ENCODE measurements at regions of chr14 and their contacts with region 1.

Region 1: GRCh38 chr14:22472935-22473854 is 115.8 kb downstream of the DAD1 start:
- DNase-seq: peak in 1 of 2 experiments; percentile 66
- H3K4me3 ChIP-seq: no peak overlapping the region
- H3K27ac ChIP-seq: no peak overlapping the region
- H3K4me1 ChIP-seq: peaks cover 0 to 4% (median under 1%) of the 10 kb centered on the region in 4 experiments; a peak in 2 of 7 replicates
- H3K27me3 ChIP-seq: no peaks in the 10 kb centered on the region; a peak in 1 of 7 replicates
- CTCF ChIP-seq: peak in 2 of 3 experiments; percentile 63 to 75; a peak in 3 of 4 replicates
- EP300 ChIP-seq: no peak
- POLR2A ChIP-seq: no peak
- RAD21 ChIP-seq: peak; percentile 84 to 87

Region 2: DNA sequence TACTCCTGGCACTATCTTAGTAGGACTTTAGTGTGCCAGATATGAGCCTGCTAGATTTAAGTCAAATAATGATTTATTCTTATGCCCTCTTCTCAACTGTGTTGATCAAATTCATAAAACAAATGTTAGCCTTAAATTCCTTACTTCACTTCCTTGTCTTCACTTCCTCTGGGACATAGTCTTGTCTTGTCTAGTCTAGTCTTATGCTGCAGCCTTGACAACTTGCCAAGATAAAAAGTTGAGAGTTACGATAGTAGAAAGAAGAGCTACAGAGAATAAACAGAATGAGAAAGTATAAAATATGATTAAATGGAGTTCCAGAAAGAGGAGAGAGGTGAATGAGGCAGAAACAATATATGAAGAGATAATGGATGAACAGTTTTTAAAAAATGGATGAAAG is 262.3 kb before region 1 on chr14:
- CTCF ChIA-PET with region 1: no interaction called
- POLR2A ChIA-PET with region 1: no interaction called
- DNase-seq: no peak
- H3K4me3 ChIP-seq: no peak overlapping the region
- H3K27ac ChIP-seq: no peak overlapping the region
- H3K4me1 ChIP-seq: no peaks in the 10 kb centered on the region
- H3K27me3 ChIP-seq: no peaks in the 10 kb centered on the region
- CTCF ChIP-seq: no peak
- EP300 ChIP-seq: no peak
- POLR2A ChIP-seq: no peak
- RAD21 ChIP-seq: no peak

Region 3: DNA sequence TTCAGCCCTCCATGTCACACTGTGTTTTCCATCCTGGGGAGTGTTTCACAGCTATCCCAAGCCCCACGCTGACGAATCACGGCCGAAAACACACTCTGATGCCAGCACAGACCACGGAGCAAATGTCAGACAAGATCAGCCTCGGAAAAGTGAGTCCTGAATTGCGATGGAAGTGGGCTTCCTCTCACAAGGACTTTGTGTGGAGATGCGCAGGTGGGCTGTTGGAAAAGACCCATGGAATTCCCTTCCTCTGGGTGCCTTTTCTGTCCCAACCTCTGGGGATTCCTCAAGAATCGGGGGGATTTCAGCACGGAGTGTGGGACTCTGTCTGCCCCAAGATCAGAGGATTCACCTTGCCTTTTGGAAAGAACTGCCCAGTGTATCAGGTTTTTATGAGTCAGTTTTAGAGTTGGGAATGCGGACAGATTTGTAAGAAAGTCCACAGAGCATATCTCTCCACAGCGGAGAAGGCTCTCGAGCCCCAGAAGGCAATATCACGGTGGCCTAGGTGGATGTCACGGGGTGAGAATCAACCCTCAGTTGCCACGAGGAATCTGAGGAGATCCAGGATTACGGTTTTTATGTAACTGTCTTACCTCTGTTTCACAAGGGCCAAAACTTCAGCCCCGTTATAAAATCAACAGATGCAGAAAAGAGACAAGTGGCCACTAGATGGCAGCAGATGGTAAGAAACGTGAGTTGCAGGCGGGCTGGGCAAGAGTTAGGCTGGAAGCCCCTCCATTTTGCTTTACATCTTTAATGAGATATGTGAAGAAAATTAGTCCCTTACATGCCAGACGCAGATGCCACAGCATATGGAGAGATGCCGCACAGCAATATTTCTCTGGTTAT is 86.0 kb before region 1 on chr14:
- CTCF ChIA-PET with region 1: interaction called, 142 read pairs
- POLR2A ChIA-PET with region 1: no interaction called
- DNase-seq: peak; percentile 9 to 80
- H3K4me3 ChIP-seq: no peak overlapping the region
- H3K27ac ChIP-seq: no peak overlapping the region
- H3K4me1 ChIP-seq: no peaks in the 10 kb centered on the region
- H3K27me3 ChIP-seq: no peaks in the 10 kb centered on the region
- CTCF ChIP-seq: peak; percentile 38 to 88 (median 78)
- EP300 ChIP-seq: no peak
- POLR2A ChIP-seq: no peak
- RAD21 ChIP-seq: peak; percentile 92 to 95

Region 4: DNA sequence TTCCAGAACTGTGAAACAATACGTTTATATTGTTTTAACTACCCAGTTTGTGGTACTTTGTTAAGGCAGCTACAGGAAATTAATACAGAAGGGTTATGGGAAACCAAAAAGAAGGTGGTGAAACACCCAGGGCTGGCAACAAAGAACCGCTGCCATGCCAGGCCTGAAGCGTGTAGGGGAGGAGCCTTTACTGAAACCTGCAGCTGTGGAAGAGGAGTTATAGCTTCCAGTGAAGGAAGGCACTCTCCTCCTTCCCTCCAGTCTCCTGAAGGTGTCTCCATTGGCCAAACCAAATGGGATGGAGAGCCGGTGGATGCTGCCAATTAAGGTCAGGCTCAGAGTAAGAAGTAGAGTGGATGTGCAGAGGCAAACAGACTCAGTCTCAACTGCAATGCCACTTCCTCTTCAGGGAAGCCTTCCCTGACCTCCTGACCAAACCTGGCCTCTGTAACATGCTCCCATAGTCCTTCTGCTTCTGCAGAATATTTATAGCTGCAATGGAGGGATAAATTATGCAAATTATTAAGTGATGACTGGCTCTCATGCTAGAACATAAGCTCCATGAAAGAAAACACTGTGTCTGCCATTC is 52.5 kb before region 1 on chr14:
- CTCF ChIA-PET with region 1: interaction called, 12 read pairs
- POLR2A ChIA-PET with region 1: no interaction called
- DNase-seq: no peak
- H3K4me3 ChIP-seq: no peak overlapping the region
- H3K27ac ChIP-seq: no peak overlapping the region
- H3K4me1 ChIP-seq: peaks cover 0 to 2% (median 0%) of the 10 kb centered on the region in 4 experiments; a peak in 1 of 7 replicates
- H3K27me3 ChIP-seq: no peaks in the 10 kb centered on the region
- CTCF ChIP-seq: no peak
- EP300 ChIP-seq: no peak
- POLR2A ChIP-seq: no peak
- RAD21 ChIP-seq: no peak

Region 5: DNA sequence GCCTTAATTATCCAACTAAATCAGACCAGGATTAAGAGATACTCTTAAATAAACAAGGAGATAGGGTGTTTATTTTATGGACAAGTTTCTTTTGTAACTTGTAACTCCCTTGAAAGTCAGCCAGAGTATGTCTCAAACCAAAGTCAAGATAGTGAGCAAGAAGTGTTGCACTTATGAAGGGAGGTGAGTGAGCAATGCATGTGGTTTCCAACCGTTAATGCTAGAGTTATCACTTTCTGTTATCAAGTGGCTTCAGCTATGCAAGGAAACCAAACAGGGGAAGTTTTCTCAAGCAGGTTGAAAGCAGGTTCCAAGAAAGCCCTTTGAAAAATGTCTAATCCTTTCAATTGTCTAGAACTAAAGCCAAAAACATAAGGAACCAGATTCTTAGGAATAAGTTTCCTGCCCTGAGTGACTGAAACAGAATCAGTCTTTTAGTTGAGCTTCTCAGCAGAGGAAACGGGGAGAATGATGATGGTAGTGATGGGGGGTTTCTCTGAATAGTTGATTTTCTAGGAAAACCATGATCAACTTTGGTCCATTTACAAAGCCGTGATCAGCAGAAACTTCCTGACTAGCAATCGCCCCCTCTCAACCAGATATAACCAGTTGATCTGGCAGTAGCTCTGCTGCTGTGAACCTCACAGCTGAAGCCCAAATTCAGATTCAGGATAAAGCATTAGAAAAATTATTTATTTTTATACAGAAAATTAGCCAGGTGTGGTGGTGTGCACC is 12.6 kb before region 1 on chr14:
- CTCF ChIA-PET with region 1: interaction called, 27 read pairs
- POLR2A ChIA-PET with region 1: interaction called, 3 read pairs
- DNase-seq: no peak
- H3K4me3 ChIP-seq: no peak overlapping the region
- H3K27ac ChIP-seq: no peak overlapping the region
- H3K4me1 ChIP-seq: no peaks in the 10 kb centered on the region
- H3K27me3 ChIP-seq: no peaks in the 10 kb centered on the region
- CTCF ChIP-seq: no peak
- EP300 ChIP-seq: no peak
- POLR2A ChIP-seq: no peak
- RAD21 ChIP-seq: no peak

Region 6: DNA sequence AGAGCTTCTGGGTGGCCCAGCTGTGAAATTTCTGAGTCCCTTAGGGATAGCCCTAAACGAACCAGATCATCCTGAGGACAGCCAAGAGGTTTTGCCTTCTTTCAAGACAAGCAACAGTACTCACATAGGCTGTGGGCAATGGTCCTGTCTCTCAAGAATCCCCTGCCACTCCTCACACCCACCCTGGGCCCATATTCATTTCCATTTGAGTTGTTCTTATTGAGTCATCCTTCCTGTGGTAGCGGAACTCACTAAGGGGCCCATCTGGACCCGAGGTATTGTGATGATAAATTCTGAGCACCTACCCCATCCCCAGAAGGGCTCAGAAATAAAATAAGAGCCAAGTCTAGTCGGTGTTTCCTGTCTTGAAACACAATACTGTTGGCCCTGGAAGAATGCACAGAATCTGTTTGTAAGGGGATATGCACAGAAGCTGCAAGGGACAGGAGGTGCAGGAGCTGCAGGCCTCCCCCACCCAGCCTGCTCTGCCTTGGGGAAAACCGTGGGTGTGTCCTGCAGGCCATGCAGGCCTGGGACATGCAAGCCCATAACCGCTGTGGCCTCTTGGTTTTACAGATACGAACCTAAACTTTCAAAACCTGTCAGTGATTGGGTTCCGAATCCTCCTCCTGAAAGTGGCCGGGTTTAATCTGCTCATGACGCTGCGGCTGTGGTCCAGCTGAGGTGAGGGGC is 76.9 kb after region 1 on chr14:
- CTCF ChIA-PET with region 1: interaction called, 12 read pairs
- POLR2A ChIA-PET with region 1: no interaction called
- DNase-seq: peak in 1 of 2 experiments; percentile 43
- H3K4me3 ChIP-seq: no peak overlapping the region; a peak in 1 of 8 replicates
- H3K27ac ChIP-seq: peak overlapping the region; percentile 6; the same call in 1 of the 2 replicates
- H3K4me1 ChIP-seq: peaks cover 11 to 21% (median 14%) of the 10 kb centered on the region in 4 experiments
- H3K27me3 ChIP-seq: no peaks in the 10 kb centered on the region; a peak in 2 of 7 replicates
- CTCF ChIP-seq: no peak
- EP300 ChIP-seq: no peak
- POLR2A ChIP-seq: no peak
- RAD21 ChIP-seq: no peak

Measured in H1 (cell line).